Transverse colon (tissue), 4 donors: ENCODE measurements at regions of chr9 and their contacts with region 1.

Region 1: DNA sequence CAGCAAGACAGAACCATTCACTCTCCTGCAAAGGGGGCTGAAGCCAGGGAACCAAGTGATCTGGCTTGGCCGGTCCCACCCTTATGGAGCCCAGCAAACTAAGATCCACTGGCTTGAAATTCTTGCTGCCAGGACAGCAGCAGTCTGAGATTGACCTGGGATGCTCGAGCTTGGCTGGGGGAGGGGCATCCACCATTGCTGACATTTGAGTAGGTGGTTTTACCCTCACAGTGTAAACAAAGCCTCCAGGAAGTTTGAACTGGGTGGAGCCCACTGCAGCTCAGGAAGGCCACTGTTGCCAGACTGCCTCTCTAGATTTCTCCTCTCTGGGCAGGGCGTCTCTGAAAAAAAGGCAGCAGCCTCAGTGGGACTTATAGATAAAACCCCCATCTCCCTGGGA is 60.5 kb downstream of the TNFSF8 start:
- DNase-seq: peak; percentile 52
- H3K4me3 ChIP-seq: no peak overlapping the region
- H3K27ac ChIP-seq: no peak overlapping the region
- H3K4me1 ChIP-seq: peaks cover 0 to 8% (median 7%) of the 10 kb centered on the region in 4 donors
- H3K27me3 ChIP-seq: no peaks in the 10 kb centered on the region
- CTCF ChIP-seq: no peak
- EP300 ChIP-seq: no peak
- POLR2A ChIP-seq: no peak

Region 2: DNA sequence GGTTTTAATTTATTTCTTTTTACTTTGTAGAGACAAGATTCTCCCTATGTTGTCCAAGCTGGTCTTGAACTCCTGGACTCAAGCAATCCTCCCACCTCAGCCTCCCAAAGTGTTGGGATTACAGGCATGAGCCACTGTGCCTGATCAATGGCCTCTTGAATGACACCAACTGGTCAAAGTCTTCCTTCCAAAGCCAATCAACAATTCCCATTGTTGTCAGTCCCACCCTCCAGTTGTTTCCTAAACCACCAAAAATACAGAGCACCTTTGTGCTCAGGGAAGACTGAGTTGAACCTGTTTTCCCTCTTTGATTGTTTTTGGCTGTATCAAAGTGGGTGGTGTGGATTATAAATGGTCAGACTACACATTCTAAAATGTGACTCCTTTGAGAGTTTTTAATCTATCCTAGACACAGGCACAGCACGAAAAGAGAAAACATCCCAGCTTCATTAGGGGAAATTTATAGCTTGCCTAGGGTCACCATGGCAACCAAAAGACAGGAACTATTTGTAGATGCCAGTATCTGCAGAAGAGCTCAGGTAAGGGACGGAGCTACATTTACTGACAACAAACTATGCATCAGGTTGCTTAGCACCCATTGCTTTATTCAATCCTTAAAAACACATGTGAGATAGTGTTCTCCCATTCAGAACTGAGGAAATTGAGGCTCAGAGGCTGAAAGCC is 309.9 kb before region 1 on chr9:
- in situ Hi-C with region 1: no loop called
- intact Hi-C with region 1: no loop called
- DNase-seq: no peak
- H3K4me3 ChIP-seq: no peak overlapping the region
- H3K27ac ChIP-seq: no peak overlapping the region
- H3K4me1 ChIP-seq: no peaks in the 10 kb centered on the region
- H3K27me3 ChIP-seq: no peaks in the 10 kb centered on the region
- CTCF ChIP-seq: no peak
- EP300 ChIP-seq: no peak
- POLR2A ChIP-seq: no peak

Region 3: DNA sequence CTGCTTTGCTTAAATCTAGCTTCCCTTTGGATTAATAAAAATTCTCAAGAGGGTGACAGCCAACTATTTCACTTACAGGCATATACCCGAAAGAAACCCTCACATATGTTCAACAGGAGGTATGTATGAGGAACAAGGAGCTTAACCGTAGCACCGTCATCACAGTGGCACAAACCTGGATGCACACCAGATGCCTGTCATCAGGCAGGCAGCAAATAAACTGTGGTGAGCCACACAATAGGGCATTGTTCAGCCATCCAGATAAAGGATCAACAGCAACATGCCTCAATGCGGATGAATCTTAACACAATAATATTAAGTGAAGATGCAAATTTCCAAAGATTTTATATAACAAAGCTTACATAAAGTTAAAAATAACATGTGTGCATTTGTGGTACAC is 58.5 kb before region 1 on chr9:
- in situ Hi-C with region 1: no loop called
- intact Hi-C with region 1: loop called (anchors 10 kb)
- DNase-seq: no peak
- H3K4me3 ChIP-seq: no peak overlapping the region
- H3K27ac ChIP-seq: no peak overlapping the region
- H3K4me1 ChIP-seq: peaks cover 5 to 12% (median 7%) of the 10 kb centered on the region in 4 donors
- H3K27me3 ChIP-seq: no peaks in the 10 kb centered on the region
- CTCF ChIP-seq: no peak
- EP300 ChIP-seq: no peak
- POLR2A ChIP-seq: no peak